Activated CD4-positive, alpha-beta memory T cell treated with anti-CD3 and anti-CD28 coated beads for 36 hours (primary cell): ENCODE measurements at regions of chr6 and their contacts with region 1.

Region 1: GRCh38 chr6:17599885-17600526 is at the start of gene FAM8A1:
- DNase-seq: peak; percentile 98
- H3K4me3 Mint-ChIP-seq: peak within 1 kb of the TSS; percentile 81
- H3K27ac Mint-ChIP-seq: peak within 1 kb of the TSS; percentile 64
- H3K4me1 Mint-ChIP-seq: peaks cover 37% of the 10 kb centered on the region
- H3K27me3 Mint-ChIP-seq: no peaks in the 10 kb centered on the region
- total RNA-seq, gene FAM8A1: 5.0 to 5.1 TPM

Region 2: GRCh38 chr6:17565399-17565798 is 34.6 kb before region 1 on chr6:
- CTCF ChIA-PET with region 1: no interaction called
- POLR2A ChIA-PET with region 1: no interaction called
- intact Hi-C with region 1: no loop called
- DNase-seq: no peak
- H3K4me3 Mint-ChIP-seq: no peak overlapping the region
- H3K27ac Mint-ChIP-seq: no peak overlapping the region
- H3K4me1 Mint-ChIP-seq: no peaks in the 10 kb centered on the region
- H3K27me3 Mint-ChIP-seq: peaks cover 4% of the 10 kb centered on the region

Region 3: DNA sequence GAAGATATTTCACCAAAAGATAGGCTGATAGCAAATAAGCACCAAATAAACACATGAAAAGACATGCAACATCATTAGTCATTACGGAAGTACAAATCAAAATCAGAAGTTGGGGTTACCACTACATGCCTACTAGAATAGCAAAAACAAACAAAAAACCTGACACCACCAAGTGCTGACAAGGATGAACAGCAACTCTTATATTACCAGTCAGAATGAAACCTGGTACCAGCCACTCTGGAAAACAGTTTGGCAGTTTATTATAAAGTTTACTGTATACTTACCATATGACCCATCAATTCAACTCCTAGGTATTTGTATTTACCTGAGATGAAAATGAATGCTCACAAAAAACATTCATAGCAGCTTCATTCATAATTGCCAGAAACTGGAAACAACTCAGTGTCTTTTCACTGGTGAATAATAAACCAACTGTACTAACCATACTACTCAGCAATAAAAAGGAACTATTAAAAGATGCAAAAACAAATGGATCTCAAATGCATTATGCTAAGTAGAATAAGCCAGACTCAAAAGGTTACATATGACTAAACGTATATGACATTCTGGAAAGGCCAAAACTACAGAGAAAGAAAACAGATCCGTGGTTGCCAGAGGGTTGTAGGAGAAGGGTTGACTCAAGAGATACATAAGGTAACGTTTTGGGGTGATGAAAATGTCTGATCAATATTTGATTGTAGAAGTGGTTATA is 73.7 kb after region 1 on chr6:
- CTCF ChIA-PET with region 1: no interaction called
- POLR2A ChIA-PET with region 1: interaction called, 3 read pairs
- intact Hi-C with region 1: loop called (anchors 2 kb)
- DNase-seq: no peak
- H3K4me3 Mint-ChIP-seq: no peak overlapping the region
- H3K27ac Mint-ChIP-seq: peak overlapping the region; percentile 73
- H3K4me1 Mint-ChIP-seq: peaks cover 35% of the 10 kb centered on the region
- H3K27me3 Mint-ChIP-seq: no peaks in the 10 kb centered on the region

Region 4: DNA sequence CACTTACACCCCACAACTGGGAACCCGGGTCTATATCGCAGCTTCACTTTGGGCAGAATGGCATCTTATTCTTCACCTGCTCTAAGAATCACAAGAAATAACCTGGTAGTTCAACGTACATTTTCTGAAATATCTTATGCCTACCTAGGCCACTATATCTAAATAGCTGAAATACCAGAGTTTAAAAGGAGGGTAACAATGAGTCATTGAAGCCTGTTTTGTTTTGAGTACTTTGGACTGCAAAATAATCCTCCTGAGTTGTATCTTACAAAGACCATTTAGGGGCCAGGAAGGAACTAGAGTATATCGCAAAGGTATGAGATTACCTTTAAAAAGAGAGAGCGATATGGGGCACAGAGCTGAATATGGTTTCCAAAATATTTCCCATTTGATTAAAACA is 203.4 kb after region 1 on chr6:
- CTCF ChIA-PET with region 1: interaction called, 8 read pairs
- POLR2A ChIA-PET with region 1: no interaction called
- intact Hi-C with region 1: loop called (anchors 5 kb)
- DNase-seq: no peak
- H3K4me3 Mint-ChIP-seq: no peak overlapping the region
- H3K27ac Mint-ChIP-seq: no peak overlapping the region
- H3K4me1 Mint-ChIP-seq: no peaks in the 10 kb centered on the region
- H3K27me3 Mint-ChIP-seq: peaks cover 8% of the 10 kb centered on the region

Region 5: DNA sequence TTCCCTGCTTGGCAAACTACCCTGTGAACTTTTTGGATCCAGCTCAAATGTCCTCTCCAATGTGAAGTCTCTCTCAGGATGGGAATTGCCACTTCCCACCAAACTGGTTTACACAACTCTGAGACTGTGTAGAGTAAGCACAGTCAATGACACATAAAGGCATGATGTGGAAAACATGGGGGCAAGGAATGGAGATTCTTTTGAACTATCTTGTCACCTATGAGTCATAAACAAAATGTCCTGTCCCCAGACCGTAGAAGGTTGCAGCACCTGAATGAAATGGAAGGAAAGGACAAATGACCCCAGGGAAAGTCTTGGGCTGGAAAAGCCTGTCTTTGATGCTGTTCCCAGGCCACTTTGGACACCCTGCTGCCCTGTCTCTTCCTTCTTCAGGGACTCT is 398.4 kb after region 1 on chr6:
- CTCF ChIA-PET with region 1: no interaction called
- POLR2A ChIA-PET with region 1: no interaction called
- intact Hi-C with region 1: loop called (anchors 10 kb)
- DNase-seq: no peak
- H3K4me3 Mint-ChIP-seq: no peak overlapping the region
- H3K27ac Mint-ChIP-seq: no peak overlapping the region
- H3K4me1 Mint-ChIP-seq: no peaks in the 10 kb centered on the region
- H3K27me3 Mint-ChIP-seq: peaks cover 31% of the 10 kb centered on the region

Region 6: GRCh38 chr6:18264219-18264922 is 664.4 kb after region 1 on chr6 and contains the start of gene DEK:
- CTCF ChIA-PET with region 1: no interaction called
- POLR2A ChIA-PET with region 1: no interaction called
- intact Hi-C with region 1: loop called (anchors 5 kb)
- DNase-seq: peak; percentile 90
- H3K4me3 Mint-ChIP-seq: peak within 1 kb of the TSS; percentile 95
- H3K27ac Mint-ChIP-seq: peak within 1 kb of the TSS; percentile 96
- H3K4me1 Mint-ChIP-seq: peaks cover 49% of the 10 kb centered on the region
- H3K27me3 Mint-ChIP-seq: no peaks in the 10 kb centered on the region
- total RNA-seq, gene DEK: 180 to 182 TPM